ENCODE measurements at regions of chr17 and their contacts with region 1.

Region 1: GRCh38 chr17:39889200-39889599 is 21.2 kb downstream of the ZPBP2 start:
- DNase-seq: peak; percentile 82
- H3K4me3 Mint-ChIP-seq: no peak overlapping the region
- H3K27ac Mint-ChIP-seq: no peak overlapping the region
- H3K4me1 Mint-ChIP-seq: peaks cover 26% of the 10 kb centered on the region
- H3K27me3 Mint-ChIP-seq: peaks cover 22% of the 10 kb centered on the region
- CTCF ChIP-seq: no peak

Region 2: GRCh38 chr17:39787743-39788484 is 101.3 kb before region 1 on chr17:
- CTCF ChIA-PET with region 1: interaction called, 1,212 read pairs
- intact Hi-C with region 1: no loop called
- DNase-seq: peak; percentile 80
- H3K4me3 Mint-ChIP-seq: no peak overlapping the region
- H3K27ac Mint-ChIP-seq: no peak overlapping the region
- H3K4me1 Mint-ChIP-seq: peaks cover 29% of the 10 kb centered on the region
- H3K27me3 Mint-ChIP-seq: no peaks in the 10 kb centered on the region
- CTCF ChIP-seq: no peak

Region 3: DNA sequence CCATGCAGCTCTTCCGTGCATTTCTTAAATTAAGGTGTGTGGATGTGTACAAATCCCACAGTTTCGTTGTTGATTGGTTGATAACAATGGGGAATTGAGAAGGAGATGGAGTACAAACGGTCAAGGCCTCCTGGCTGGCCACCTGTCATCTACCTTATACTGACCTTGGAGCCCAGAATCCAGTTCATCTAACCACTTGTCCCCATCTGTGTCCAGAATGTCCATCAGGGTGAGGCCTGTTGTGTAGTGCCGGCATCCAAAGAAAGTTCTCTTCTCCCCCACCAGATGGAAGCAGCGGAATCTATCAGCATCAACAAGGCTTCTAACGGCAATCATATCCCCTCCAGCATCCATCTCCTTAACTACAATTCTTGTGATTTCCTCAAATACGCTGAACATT is 27.7 kb after region 1 on chr17:
- CTCF ChIA-PET with region 1: interaction called, 4,357 read pairs
- intact Hi-C with region 1: loop called (anchors 1 kb)
- DNase-seq: peak; percentile 94
- H3K4me3 Mint-ChIP-seq: no peak overlapping the region
- H3K27ac Mint-ChIP-seq: no peak overlapping the region
- H3K4me1 Mint-ChIP-seq: peaks cover 24% of the 10 kb centered on the region
- H3K27me3 Mint-ChIP-seq: no peaks in the 10 kb centered on the region
- CTCF ChIP-seq: no peak